CD4-positive, alpha-beta memory T cell (primary cell): ENCODE measurements at regions of chr18 and their contacts with region 1.

Region 1: DNA sequence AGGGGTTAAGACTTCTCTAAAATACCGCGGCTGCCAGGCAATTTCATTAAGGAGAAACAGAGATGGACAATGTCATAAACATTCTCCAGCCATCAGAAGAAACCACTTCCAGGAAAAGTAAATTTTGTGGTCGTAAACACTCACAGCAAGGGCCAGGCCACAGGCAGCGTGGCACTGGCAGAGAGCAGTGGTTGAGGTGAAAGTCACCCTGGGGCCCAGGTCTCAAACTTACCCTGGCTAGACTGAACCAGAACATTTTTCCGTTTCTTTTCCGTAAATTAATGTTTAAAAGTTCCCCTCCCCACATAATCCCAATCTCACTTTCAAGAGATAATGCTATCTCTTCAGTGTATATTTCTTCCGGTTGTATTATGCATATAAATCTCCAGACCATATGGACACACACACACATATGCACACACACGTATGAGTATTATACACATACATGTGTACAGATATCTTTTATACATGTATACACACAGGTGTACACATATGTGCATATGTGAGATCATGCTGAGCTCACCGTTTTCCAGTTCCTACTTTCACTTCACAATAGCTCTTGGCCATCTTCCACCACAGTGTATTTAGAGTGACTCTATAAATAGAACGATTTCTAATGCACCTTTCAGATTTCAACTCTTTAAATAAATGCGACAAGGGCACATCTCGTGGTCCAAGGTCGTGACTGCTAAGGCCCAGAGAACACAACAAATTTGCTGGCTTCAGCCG is 90.1 kb downstream of the MALT1 start:
- DNase-seq: no peak
- H3K4me3 ChIP-seq: no peak overlapping the region
- H3K4me3 Mint-ChIP-seq: peak overlapping the region in 5 of 8 donors; percentile 15 to 46 (median 37)
- H3K27ac ChIP-seq: no peak overlapping the region
- H3K27ac Mint-ChIP-seq: peak overlapping the region in 1 of 7 donors; percentile 75
- H3K4me1 ChIP-seq: peaks cover 19% of the 10 kb centered on the region
- H3K4me1 Mint-ChIP-seq: peaks cover 24 to 35% (median 27%) of the 10 kb centered on the region in 4 donors
- H3K27me3 ChIP-seq: no peaks in the 10 kb centered on the region
- H3K27me3 Mint-ChIP-seq: peaks cover 10 to 11% of the 10 kb centered on the region in 2 donors

Region 2: DNA sequence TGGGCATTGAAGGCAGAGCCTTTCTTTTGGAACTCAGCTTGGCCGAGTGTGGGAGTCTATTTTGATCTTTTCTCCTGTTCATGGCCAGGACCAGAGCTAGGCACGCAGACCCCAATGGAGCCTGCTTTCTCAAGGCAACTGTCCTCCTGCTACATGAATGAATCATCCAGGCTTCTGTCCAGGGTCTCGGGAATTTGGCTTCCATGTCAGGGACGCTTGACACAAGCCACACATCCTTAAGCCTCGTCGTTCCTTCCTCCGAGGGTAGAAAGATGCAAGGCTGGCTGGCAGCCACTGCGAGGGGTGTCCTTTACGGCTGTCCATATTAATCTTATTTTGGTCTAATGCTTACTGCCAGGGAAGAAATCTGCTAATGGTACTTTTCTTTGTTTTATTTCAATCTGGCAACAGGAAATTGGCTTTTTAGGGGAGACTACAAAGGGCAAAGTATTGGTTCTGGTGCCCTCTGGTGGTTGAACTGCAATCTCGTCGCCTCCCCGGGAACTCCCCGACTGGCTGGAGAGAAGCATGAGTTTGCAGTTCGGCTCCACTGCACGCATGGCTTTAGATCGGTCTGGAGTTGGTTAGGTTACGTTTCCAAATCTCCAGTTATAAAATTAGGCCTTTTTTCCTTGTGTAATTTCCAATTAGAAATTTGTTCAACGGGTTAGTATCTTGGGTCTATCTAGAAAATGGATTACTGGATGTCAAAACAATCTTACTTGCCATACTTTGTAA is 267.7 kb before region 1 on chr18:
- CTCF ChIA-PET with region 1: interaction called, 25 read pairs
- POLR2A ChIA-PET with region 1: no interaction called
- intact Hi-C with region 1: loop called (anchors 1 kb)
- DNase-seq: peak; percentile 60 to 73 (median 62)
- H3K4me3 ChIP-seq: no peak overlapping the region
- H3K4me3 Mint-ChIP-seq: peak overlapping the region in 3 of 8 donors; percentile 8 to 23 (median 21)
- H3K27ac ChIP-seq: no peak overlapping the region
- H3K27ac Mint-ChIP-seq: peak overlapping the region in 2 of 7 donors; percentile 23 to 32
- H3K4me1 ChIP-seq: peaks cover 7% of the 10 kb centered on the region
- H3K4me1 Mint-ChIP-seq: peaks cover 4 to 15% (median 5%) of the 10 kb centered on the region in 4 donors
- H3K27me3 ChIP-seq: no peaks in the 10 kb centered on the region
- H3K27me3 Mint-ChIP-seq: peaks cover 22% of the 10 kb centered on the region in 2 donors

Region 3: DNA sequence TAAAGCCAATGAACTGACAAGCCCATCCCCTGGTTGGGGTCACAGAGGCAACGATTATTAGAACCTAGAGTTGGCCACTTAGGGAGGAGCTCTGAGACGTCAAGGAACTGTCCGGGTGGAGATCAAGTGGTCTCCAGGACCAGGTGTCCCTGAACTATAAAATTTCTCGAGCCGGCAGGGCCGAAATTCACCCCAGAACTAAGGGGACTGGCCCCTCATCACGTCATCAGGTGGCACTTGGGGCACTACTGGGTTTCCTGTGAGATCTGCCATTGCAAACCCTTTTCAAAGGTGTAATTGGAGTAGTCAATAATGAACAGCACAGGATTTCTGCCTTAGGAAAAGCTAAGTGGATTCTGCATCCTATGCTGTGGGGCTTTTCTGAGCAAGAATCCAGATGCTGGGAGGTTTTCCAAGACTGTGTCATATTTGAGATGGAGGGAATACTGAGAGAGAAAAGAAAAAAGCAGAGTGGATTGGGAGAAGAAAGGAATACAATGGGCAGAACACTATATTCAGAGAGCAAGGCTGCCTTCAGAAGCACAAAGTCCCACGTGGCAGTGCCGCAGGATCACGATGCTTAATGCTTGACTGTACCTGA is 246.1 kb before region 1 on chr18:
- CTCF ChIA-PET with region 1: interaction called, 20 read pairs
- POLR2A ChIA-PET with region 1: no interaction called
- intact Hi-C with region 1: no loop called
- DNase-seq: no peak
- H3K4me3 ChIP-seq: no peak overlapping the region
- H3K4me3 Mint-ChIP-seq: no peak overlapping the region
- H3K27ac ChIP-seq: no peak overlapping the region
- H3K27ac Mint-ChIP-seq: peak overlapping the region in 1 of 7 donors; percentile 12
- H3K4me1 ChIP-seq: no peaks in the 10 kb centered on the region
- H3K4me1 Mint-ChIP-seq: peaks cover 0 to 4% (median 0%) of the 10 kb centered on the region in 4 donors
- H3K27me3 ChIP-seq: no peaks in the 10 kb centered on the region
- H3K27me3 Mint-ChIP-seq: peaks cover 3 to 13% of the 10 kb centered on the region in 2 donors

Region 4: DNA sequence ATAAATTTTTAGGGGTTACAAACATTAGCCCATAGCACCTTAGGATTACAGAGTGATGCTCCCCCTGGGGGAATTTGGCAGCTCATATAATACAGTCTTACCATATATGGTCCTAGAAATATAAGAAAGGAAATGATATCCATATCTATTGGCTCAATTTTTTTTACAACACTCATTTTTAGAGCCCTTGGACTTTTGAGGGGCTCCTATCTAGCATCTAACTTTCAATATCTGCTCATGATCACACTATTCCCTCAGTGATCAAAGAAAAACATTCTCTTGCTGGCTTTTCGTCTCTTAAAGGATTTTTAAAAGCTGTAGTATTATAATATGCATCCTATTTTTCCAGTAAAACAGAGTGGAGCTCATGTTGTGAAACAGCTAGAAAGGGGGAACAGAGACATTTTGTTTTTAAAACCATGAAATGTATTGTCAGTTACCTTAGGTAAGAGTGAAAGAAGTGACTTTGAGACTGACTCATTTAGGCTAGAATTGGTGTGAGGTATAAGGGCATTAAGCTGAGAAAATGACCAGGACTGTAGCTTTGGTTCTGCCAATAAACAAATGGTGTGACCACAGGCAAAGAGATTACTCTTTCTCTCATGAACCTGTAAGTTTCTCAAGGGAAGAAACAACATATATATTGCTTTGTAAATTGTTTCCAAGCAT is 198.3 kb before region 1 on chr18:
- CTCF ChIA-PET with region 1: interaction called, 13 read pairs
- POLR2A ChIA-PET with region 1: no interaction called
- intact Hi-C with region 1: no loop called
- DNase-seq: no peak
- H3K4me3 ChIP-seq: no peak overlapping the region
- H3K4me3 Mint-ChIP-seq: no peak overlapping the region
- H3K27ac ChIP-seq: no peak overlapping the region
- H3K27ac Mint-ChIP-seq: no peak overlapping the region
- H3K4me1 ChIP-seq: no peaks in the 10 kb centered on the region
- H3K4me1 Mint-ChIP-seq: peaks cover 0 to 18% (median 6%) of the 10 kb centered on the region in 4 donors
- H3K27me3 ChIP-seq: no peaks in the 10 kb centered on the region
- H3K27me3 Mint-ChIP-seq: no peaks in the 10 kb centered on the region

Region 5: GRCh38 chr18:58748899-58749595 is 12.4 kb before region 1 on chr18:
- CTCF ChIA-PET with region 1: interaction called, 42 read pairs
- POLR2A ChIA-PET with region 1: no interaction called
- intact Hi-C with region 1: no loop called
- DNase-seq: no peak
- H3K4me3 ChIP-seq: no peak overlapping the region
- H3K4me3 Mint-ChIP-seq: no peak overlapping the region
- H3K27ac ChIP-seq: no peak overlapping the region
- H3K27ac Mint-ChIP-seq: no peak overlapping the region
- H3K4me1 ChIP-seq: no peaks in the 10 kb centered on the region
- H3K4me1 Mint-ChIP-seq: peaks cover 0 to 5% (median under 1%) of the 10 kb centered on the region in 4 donors
- H3K27me3 ChIP-seq: no peaks in the 10 kb centered on the region
- H3K27me3 Mint-ChIP-seq: no peaks in the 10 kb centered on the region